H1 (cell line): ENCODE measurements at regions of chr14 and their contacts with region 1.

Region 1: DNA sequence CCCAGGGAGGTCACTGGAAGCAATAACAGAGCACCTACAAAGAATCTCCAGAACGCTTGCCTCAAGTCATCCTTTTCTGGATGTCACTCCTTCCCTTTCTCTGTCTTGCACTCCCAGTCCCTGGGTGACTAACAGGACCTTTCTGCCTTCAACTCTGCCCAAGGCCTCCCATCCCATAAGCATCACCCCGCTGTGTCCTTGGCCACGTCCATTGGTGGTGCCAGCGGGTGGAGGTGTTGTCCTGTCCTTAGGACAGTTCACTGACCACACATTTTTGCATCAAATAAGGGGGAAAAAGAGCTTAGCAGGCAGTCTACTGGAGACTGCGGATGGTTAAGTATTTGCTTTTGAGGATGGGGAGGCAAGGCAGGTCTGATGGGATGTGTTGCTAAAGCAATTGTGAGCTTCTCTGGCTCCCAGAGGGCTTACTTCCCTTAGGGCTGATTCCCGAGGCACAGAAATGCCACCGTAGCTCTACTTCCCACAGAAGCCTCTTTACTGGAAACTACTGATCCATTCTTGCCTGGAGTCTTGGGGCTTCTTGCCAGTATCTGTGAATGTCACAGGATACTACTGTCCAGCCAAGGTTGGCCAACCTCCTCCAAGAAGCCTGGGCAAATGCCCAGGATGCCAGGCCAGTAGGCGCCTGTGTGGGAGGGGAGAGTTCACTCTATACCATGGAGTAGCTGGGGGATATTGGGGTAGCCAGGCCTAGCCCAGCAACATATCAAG is 23.8 kb upstream of the PLEK2 start:
- DNase-seq: no peak
- H3K4me3 ChIP-seq: no peak overlapping the region
- H3K27ac ChIP-seq: no peak overlapping the region
- H3K4me1 ChIP-seq: no peaks in the 10 kb centered on the region
- H3K27me3 ChIP-seq: no peaks in the 10 kb centered on the region
- CTCF ChIP-seq: no peak
- EP300 ChIP-seq: no peak
- POLR2A ChIP-seq: no peak
- RAD21 ChIP-seq: peak in 1 of 2 experiments; percentile 9; a peak in 1 of 4 replicates

Region 2: DNA sequence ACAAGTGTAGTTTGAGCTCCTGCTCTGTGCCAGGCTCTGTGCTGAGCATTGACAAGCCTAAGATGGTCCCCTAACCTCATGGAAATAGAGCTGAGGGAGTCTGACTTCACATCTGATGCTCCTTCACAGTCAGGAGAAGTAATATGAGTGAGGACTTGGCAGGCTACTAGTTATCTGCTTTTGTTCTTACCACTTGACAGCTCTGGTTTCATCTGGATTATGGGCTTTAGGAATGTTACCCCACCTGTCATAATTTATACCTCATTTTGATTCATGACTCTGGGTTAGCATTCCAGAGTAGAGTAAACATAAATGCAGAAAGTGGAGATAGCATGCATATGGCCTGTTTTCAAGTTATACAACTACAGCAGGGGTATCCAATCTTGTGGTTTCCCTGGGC is 116.6 kb before region 1 on chr14:
- CTCF ChIA-PET with region 1: no interaction called
- POLR2A ChIA-PET with region 1: no interaction called
- DNase-seq: no peak
- H3K4me3 ChIP-seq: no peak overlapping the region
- H3K27ac ChIP-seq: no peak overlapping the region
- H3K4me1 ChIP-seq: no peaks in the 10 kb centered on the region
- H3K27me3 ChIP-seq: no peaks in the 10 kb centered on the region
- CTCF ChIP-seq: no peak
- EP300 ChIP-seq: no peak
- POLR2A ChIP-seq: no peak
- RAD21 ChIP-seq: no peak

Region 3: GRCh38 chr14:67446120-67447032 is 10.6 kb after region 1 on chr14:
- CTCF ChIA-PET with region 1: interaction called, 55 read pairs
- POLR2A ChIA-PET with region 1: interaction called, 7 read pairs
- DNase-seq: no peak
- H3K4me3 ChIP-seq: no peak overlapping the region
- H3K27ac ChIP-seq: no peak overlapping the region
- H3K4me1 ChIP-seq: peaks cover 0 to 22% (median 10%) of the 10 kb centered on the region in 4 experiments; a peak in 6 of 7 replicates
- H3K27me3 ChIP-seq: no peaks in the 10 kb centered on the region; a peak in 1 of 7 replicates
- CTCF ChIP-seq: no peak
- EP300 ChIP-seq: no peak
- POLR2A ChIP-seq: no peak
- RAD21 ChIP-seq: no peak

Region 4: DNA sequence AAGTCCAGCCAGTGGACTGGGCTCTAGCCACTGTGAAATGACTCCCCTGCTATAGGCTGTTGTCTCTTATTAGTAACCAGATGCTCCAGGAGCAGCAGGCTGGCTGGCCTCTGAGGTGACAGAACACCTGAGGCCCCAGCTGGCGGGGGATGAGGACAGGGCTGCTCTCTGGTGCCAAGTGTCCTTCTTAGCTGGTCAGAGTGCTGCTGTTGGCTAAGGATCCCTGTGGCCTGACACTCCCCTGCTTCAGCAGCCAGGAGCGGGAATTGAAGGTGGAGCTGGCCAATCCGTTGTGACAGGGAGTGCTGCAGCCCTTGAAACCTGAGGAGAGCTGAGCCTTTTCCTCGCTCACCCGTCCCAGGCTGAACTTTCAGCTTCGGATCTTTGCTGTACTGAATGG is 22.0 kb after region 1 on chr14:
- CTCF ChIA-PET with region 1: interaction called, 68 read pairs
- POLR2A ChIA-PET with region 1: interaction called, 3 read pairs
- DNase-seq: peak; percentile 17 to 58
- H3K4me3 ChIP-seq: no peak overlapping the region
- H3K27ac ChIP-seq: no peak overlapping the region
- H3K4me1 ChIP-seq: peaks cover 0 to 4% (median 1%) of the 10 kb centered on the region in 4 experiments; a peak in 3 of 7 replicates
- H3K27me3 ChIP-seq: no peaks in the 10 kb centered on the region; a peak in 1 of 7 replicates
- CTCF ChIP-seq: no peak
- EP300 ChIP-seq: no peak
- POLR2A ChIP-seq: no peak
- RAD21 ChIP-seq: no peak